Vagina (tissue), 2 donors: ENCODE measurements at regions of chr7 and their contacts with region 1.

Region 1: GRCh38 chr7:54409917-54410316 is 132.3 kb upstream of the VSTM2A start:
- DNase-seq: no peak
- H3K4me3 ChIP-seq: no peak overlapping the region
- H3K27ac ChIP-seq: no peak overlapping the region
- H3K4me1 ChIP-seq: no peaks in the 10 kb centered on the region
- H3K27me3 ChIP-seq: no peaks in the 10 kb centered on the region
- CTCF ChIP-seq: no peak
- POLR2A ChIP-seq: no peak

Region 2: DNA sequence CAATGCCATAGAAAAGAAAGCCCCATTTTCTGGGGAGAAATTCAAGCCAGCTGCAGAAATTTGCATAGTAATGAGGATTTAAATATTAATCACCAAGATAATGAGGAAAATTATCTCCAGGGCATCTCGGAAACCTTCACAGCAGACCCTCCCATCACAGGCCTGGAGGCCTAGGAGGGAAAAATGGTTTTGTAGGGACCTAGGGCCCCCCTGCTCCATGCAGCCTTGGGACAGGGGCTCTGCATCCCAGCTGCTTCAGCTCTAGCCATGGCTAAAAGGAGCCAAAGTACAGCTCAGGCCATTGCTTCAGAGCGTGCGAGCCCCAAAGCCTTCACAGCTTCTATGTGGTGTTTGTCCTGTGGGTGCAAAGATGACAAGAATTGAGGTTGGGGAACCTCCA is 1209.0 kb after region 1 on chr7:
- intact Hi-C with region 1: loop called (anchors 5 kb)
- DNase-seq: no peak
- H3K4me3 ChIP-seq: no peak overlapping the region
- H3K27ac ChIP-seq: no peak overlapping the region
- H3K4me1 ChIP-seq: no peaks in the 10 kb centered on the region
- H3K27me3 ChIP-seq: no peaks in the 10 kb centered on the region
- CTCF ChIP-seq: no peak
- POLR2A ChIP-seq: no peak